Activated naive CD4-positive, alpha-beta T cell treated with anti-CD3 and anti-CD28 coated beads for 36 hours (primary cell): ENCODE measurements at regions of chr1 and their contacts with region 1.

Region 1: GRCh38 chr1:9874959-9875635 is 35.0 kb downstream of the CTNNBIP1 start:
- DNase-seq: peak; percentile 84
- H3K4me3 Mint-ChIP-seq: no peak overlapping the region
- H3K27ac Mint-ChIP-seq: no peak overlapping the region
- H3K4me1 Mint-ChIP-seq: no peaks in the 10 kb centered on the region
- H3K27me3 Mint-ChIP-seq: no peaks in the 10 kb centered on the region

Region 2: DNA sequence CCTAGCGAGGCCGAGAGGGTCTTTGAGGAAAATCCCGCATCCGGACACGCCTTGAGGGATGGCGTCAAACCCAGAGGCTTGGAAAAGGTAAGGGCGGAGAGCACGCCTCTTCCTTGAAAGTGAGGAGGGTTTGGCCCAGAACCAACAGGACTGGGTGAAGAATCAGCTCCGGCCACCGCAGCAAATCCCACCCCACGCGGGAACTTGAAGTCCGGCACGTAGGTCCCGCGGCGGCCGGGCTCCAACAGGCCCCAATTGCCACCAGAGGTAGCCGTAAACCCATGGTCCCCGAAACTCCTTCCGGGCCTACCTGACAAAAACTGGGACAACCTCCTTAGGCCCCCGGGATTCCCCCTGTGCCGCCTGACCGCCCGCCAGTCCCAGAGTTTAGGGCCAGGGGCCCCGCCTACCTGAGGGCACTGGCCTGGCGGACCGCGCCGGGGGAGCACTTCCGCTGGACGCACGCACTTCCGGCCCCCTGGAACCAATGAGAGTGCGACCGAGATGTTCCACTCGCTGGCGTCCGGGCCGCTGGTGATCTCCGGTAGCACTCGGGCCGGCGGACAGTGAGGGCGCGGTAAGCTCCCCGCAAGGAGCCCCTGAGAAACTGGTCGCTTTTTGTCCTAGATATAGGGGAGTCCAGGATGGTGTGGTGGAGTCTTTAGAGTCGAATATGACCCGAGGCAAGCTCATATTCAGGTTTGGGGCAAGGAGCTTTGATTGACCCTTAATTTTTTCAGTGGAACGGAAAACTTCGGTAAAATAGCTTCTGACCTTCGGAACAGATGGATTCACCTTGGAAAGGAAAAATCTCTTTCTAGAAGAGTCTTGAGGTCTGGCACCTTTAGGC is 68.1 kb after region 1 on chr1 and contains the starts of genes LZIC and NMNAT1:
- CTCF ChIA-PET with region 1: interaction called, 44 read pairs
- intact Hi-C with region 1: loop called (anchors 1 kb)
- DNase-seq: peak; percentile 94
- H3K4me3 Mint-ChIP-seq: peak within 1 kb of the TSS; percentile 95
- H3K27ac Mint-ChIP-seq: peak within 1 kb of the TSS; percentile 92
- H3K4me1 Mint-ChIP-seq: peaks cover 27% of the 10 kb centered on the region
- H3K27me3 Mint-ChIP-seq: no peaks in the 10 kb centered on the region
- total RNA-seq, gene LZIC: 26.1 to 27.0 TPM
- total RNA-seq, gene NMNAT1: 7.5 to 8.0 TPM

Region 3: DNA sequence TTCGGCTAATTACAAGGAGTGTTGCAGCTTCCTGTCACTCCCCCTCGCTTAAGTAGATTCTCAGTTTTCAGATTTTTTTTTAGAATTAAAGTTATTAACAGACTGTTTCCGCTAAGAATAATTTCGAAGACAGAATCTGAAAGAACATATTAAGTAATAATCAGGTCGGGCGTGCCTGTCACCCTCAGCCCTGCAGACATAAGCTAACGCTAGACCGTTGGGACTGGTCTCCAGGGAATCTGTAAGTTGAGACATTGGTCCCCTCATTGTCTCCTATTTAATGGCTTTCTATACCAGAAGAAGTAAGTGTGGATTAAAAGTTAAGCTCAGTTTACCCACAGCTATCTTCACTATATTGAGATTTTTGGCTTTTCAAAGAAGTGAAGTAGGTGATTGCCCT is 82.6 kb after region 1 on chr1:
- CTCF ChIA-PET with region 1: no interaction called
- intact Hi-C with region 1: no loop called
- DNase-seq: no peak
- H3K4me3 Mint-ChIP-seq: no peak overlapping the region
- H3K27ac Mint-ChIP-seq: no peak overlapping the region
- H3K4me1 Mint-ChIP-seq: no peaks in the 10 kb centered on the region
- H3K27me3 Mint-ChIP-seq: no peaks in the 10 kb centered on the region

Region 4: GRCh38 chr1:10152709-10153284 is 277.7 kb after region 1 on chr1:
- CTCF ChIA-PET with region 1: interaction called, 5 read pairs
- intact Hi-C with region 1: loop called (anchors 2 kb)
- DNase-seq: peak; percentile 68
- H3K4me3 Mint-ChIP-seq: no peak overlapping the region
- H3K27ac Mint-ChIP-seq: no peak overlapping the region
- H3K4me1 Mint-ChIP-seq: no peaks in the 10 kb centered on the region
- H3K27me3 Mint-ChIP-seq: no peaks in the 10 kb centered on the region